Mucosa of descending colon (tissue), 3 donors: ENCODE measurements at regions of chr6 and their contacts with region 1.

Region 1: GRCh38 chr6:82270881-82271645 is 23.5 kb upstream of the IBTK start:
- DNase-seq: no peak
- ATAC-seq: peak; percentile 50
- H3K4me3 ChIP-seq: no peak overlapping the region
- H3K4me1 ChIP-seq: no peaks in the 10 kb centered on the region
- CTCF ChIP-seq: peak; percentile 9

Region 2: GRCh38 chr6:82720992-82721391 is 449.9 kb after region 1 on chr6:
- intact Hi-C with region 1: no loop called
- DNase-seq: no peak
- ATAC-seq: no peak
- H3K4me3 ChIP-seq: no peak overlapping the region
- H3K4me1 ChIP-seq: no peaks in the 10 kb centered on the region
- CTCF ChIP-seq: no peak

Region 3: DNA sequence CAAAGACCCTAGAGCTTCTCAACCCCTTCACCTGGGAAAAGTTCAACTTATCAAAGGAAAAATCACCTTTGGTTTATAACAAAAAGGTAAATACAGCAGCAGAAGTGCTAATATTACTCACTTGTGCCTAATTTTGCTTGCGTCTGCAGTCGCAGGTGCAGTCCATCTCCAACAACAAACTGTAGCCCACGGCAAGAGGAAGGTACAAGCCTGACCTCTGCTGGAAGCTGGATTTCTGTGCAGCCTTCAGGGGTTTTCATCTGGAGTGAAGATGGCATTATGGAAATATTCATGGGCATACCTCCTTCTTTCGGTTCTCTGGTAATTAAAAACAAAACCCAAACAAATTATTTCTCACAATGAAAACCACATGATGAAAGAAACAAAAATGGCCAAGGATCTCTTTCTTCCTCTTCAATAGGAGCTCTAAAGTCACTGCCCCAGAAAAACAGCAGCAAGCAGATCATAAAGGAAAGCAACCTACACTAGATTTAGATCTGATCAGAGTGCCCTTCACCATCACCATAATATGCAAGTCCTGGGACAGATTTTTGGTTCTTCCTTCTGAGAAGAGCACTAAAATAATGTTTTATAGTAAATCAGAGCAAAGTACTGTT is 786.8 kb after region 1 on chr6:
- intact Hi-C with region 1: loop called (anchors 2 to 10 kb)
- DNase-seq: peak in 2 of 3 donors; percentile 40 to 53
- ATAC-seq: peak; percentile 77
- H3K4me3 ChIP-seq: no peak overlapping the region
- H3K4me1 ChIP-seq: no peaks in the 10 kb centered on the region
- CTCF ChIP-seq: peak; percentile 47